Esophagus muscularis mucosa (tissue), 4 donors: ENCODE measurements at regions of chr9 and their contacts with region 1.

Region 1: GRCh38 chr9:128921881-128922763 is 1.3 kb downstream of the PHYHD1 start:
- DNase-seq: no peak
- H3K4me3 ChIP-seq: peak overlapping the region; percentile 61 to 69 (median 66)
- H3K27ac ChIP-seq: peak overlapping the region; percentile 83 to 89 (median 86)
- H3K4me1 ChIP-seq: peaks cover 43 to 60% (median 56%) of the 10 kb centered on the region in 4 donors
- H3K27me3 ChIP-seq: no peaks in the 10 kb centered on the region
- CTCF ChIP-seq: peak in 2 of 3 experiments; percentile 9 to 13
- EP300 ChIP-seq: no peak
- POLR2A ChIP-seq: no peak

Region 2: GRCh38 chr9:128881901-128882681 is 40.0 kb before region 1 on chr9 and contains the starts of genes KYAT1 and LRRC8A:
- intact Hi-C with region 1: loop called (anchors 5 kb)
- DNase-seq: peak; percentile 99
- H3K4me3 ChIP-seq: peak within 1 kb of the TSS; percentile 83 to 99 (median 94)
- H3K27ac ChIP-seq: peak within 1 kb of the TSS; percentile 97 to 99 (median 98)
- H3K4me1 ChIP-seq: peaks cover 50 to 66% (median 59%) of the 10 kb centered on the region in 4 donors
- H3K27me3 ChIP-seq: no peaks in the 10 kb centered on the region
- CTCF ChIP-seq: peak in 2 of 3 experiments; percentile 11 to 27
- EP300 ChIP-seq: no peak
- POLR2A ChIP-seq: no peak
- total RNA-seq, gene KYAT1: 4.3 to 8.4 (median 6.2) TPM
- total RNA-seq, gene LRRC8A: 39.5 to 94.2 (median 55.6) TPM

Region 3: GRCh38 chr9:129023036-129023907 is 101.2 kb after region 1 on chr9:
- intact Hi-C with region 1: no loop called
- DNase-seq: no peak
- H3K4me3 ChIP-seq: no peak overlapping the region
- H3K27ac ChIP-seq: peak overlapping the region; percentile 35 to 68 (median 46)
- H3K4me1 ChIP-seq: peaks cover 16 to 51% (median 46%) of the 10 kb centered on the region in 4 donors
- H3K27me3 ChIP-seq: no peaks in the 10 kb centered on the region
- CTCF ChIP-seq: no peak
- EP300 ChIP-seq: no peak
- POLR2A ChIP-seq: no peak